Sigmoid colon (tissue), 7 donors: ENCODE measurements at regions of chr4 and their contacts with region 1.

Region 1: GRCh38 chr4:150237110-150237857 is 159.0 kb downstream of the DCLK2 start:
- DNase-seq: no peak
- H3K4me3 ChIP-seq: no peak overlapping the region
- H3K27ac ChIP-seq: peak overlapping the region; percentile 62 to 83 (median 74)
- H3K4me1 ChIP-seq: peaks cover 0 to 29% (median 21%) of the 10 kb centered on the region in 4 donors
- H3K27me3 ChIP-seq: no peaks in the 10 kb centered on the region
- CTCF ChIP-seq: no peak
- EP300 ChIP-seq: peak in 1 of 4 donors; percentile 46
- POLR2A ChIP-seq: no peak

Region 2: GRCh38 chr4:149999485-150000074 is 237.7 kb before region 1 on chr4:
- intact Hi-C with region 1: loop called (anchors 2 kb)
- DNase-seq: peak; percentile 71
- H3K4me3 ChIP-seq: no peak overlapping the region
- H3K27ac ChIP-seq: no peak overlapping the region
- H3K4me1 ChIP-seq: peaks cover 0 to 46% (median 35%) of the 10 kb centered on the region in 4 donors
- H3K27me3 ChIP-seq: no peaks in the 10 kb centered on the region
- CTCF ChIP-seq: peak; percentile 57 to 75 (median 65)
- EP300 ChIP-seq: no peak
- POLR2A ChIP-seq: no peak

Region 3: DNA sequence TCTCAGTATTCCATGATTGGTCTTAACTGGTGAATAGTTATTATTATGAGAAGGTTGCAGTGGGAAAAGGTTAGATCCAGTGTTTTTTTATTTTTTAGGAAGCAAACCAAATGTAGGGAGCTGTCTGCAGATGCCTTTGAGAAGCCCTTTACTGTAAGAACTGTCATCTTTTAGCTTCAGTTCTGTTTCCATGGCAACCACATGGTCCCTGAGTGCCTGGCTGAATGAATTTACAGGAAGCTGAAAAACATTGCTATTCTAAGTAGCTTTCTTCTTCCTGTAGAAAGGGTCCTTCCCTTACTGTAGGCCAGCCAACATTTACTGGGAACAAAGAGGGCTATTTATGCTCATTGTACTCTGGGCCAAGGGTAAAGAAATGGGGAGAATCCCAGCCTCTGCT is 55.7 kb before region 1 on chr4:
- intact Hi-C with region 1: no loop called
- DNase-seq: no peak
- H3K4me3 ChIP-seq: no peak overlapping the region
- H3K27ac ChIP-seq: no peak overlapping the region
- H3K4me1 ChIP-seq: peaks cover 0 to 26% (median 19%) of the 10 kb centered on the region in 4 donors
- H3K27me3 ChIP-seq: no peaks in the 10 kb centered on the region
- CTCF ChIP-seq: no peak
- EP300 ChIP-seq: no peak
- POLR2A ChIP-seq: no peak